Heart left ventricle (tissue), 16 donors: ENCODE measurements at regions of chr4 and their contacts with region 1.

Region 1: GRCh38 chr4:170853422-170854021 is 763.8 kb upstream of the AADAT start:
- DNase-seq: peak in 4 of 5 donors; percentile 6 to 42 (median 22)
- ATAC-seq: peak in 1 of 4 donors; percentile 49
- H3K4me3 ChIP-seq: no peak overlapping the region
- H3K27ac ChIP-seq: no peak overlapping the region
- H3K4me1 ChIP-seq: no peaks in the 10 kb centered on the region
- H3K27me3 ChIP-seq: no peaks in the 10 kb centered on the region
- CTCF ChIP-seq: peak; percentile 33 to 67 (median 54)
- POLR2A ChIP-seq: no peak

Region 2: GRCh38 chr4:170138580-170139194 is 714.8 kb before region 1 on chr4:
- intact Hi-C with region 1: loop called in 3 of 10 experiments (anchors 2 to 10 kb)
- DNase-seq: peak; percentile 37 to 69 (median 58)
- ATAC-seq: peak in 3 of 4 donors; percentile 49 to 66 (median 66)
- H3K4me3 ChIP-seq: no peak overlapping the region
- H3K27ac ChIP-seq: no peak overlapping the region
- H3K4me1 ChIP-seq: peaks cover 0 to 4% (median 0%) of the 10 kb centered on the region in 12 donors
- H3K27me3 ChIP-seq: no peaks in the 10 kb centered on the region
- CTCF ChIP-seq: peak; percentile 70 to 85 (median 76)
- POLR2A ChIP-seq: no peak

Region 3: DNA sequence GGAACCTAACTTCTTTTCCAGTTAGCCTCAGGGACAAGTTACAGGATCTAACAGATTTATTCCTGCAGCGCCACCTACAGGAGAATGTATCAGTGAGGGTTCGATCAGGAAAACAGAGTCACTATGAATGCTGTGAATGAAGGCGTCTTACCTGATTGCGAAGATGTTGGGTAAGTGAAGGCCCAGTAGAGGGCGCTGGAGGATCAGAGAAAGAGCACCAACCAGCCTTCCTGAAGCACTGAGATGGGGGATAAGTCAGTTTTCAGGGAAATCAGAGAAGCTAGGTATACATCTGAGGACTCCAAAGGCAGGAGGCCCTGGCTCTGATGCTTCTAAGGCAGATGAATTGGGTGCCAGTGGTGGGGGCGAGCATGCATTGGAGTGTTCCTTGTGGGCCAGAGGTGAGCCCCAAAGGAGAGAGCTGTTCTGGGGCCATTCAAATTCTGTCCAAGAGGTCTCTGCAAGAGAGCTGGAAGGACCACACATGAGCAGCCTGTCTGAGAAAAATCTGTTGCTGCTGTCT is 593.8 kb before region 1 on chr4:
- intact Hi-C with region 1: loop called in 7 of 10 experiments (anchors 5 to 10 kb)
- DNase-seq: peak in 3 of 5 donors; percentile 22 to 34 (median 23)
- ATAC-seq: peak in 3 of 4 donors; percentile 48 to 63 (median 50)
- H3K4me3 ChIP-seq: no peak overlapping the region
- H3K27ac ChIP-seq: no peak overlapping the region
- H3K4me1 ChIP-seq: no peaks in the 10 kb centered on the region
- H3K27me3 ChIP-seq: peaks cover 0 to 15% (median 0%) of the 10 kb centered on the region in 9 donors
- CTCF ChIP-seq: peak; percentile 39 to 71 (median 55)
- POLR2A ChIP-seq: no peak

Region 4: DNA sequence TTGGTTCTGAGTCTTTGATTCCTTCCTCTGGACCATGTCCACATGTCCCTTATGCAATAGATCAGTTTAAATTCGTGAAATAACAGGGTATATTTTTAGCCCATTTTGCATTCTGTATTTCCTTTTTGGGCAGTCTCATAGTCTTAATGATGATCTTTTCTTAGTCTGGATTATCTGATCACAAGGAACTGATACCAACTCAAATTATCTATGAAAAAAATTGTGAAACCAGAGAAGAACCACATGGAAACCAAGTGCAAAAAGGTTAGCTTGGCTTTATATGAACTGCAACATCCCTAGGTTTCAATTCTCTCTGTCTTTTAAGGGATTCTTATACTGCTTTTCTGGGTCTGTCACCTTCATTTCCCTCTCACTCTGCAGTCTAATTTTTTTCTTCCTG is 155.2 kb before region 1 on chr4:
- intact Hi-C with region 1: no loop called
- DNase-seq: no peak
- ATAC-seq: no peak
- H3K4me3 ChIP-seq: no peak overlapping the region
- H3K27ac ChIP-seq: no peak overlapping the region
- H3K4me1 ChIP-seq: no peaks in the 10 kb centered on the region
- H3K27me3 ChIP-seq: no peaks in the 10 kb centered on the region
- CTCF ChIP-seq: no peak
- POLR2A ChIP-seq: no peak

Region 5: DNA sequence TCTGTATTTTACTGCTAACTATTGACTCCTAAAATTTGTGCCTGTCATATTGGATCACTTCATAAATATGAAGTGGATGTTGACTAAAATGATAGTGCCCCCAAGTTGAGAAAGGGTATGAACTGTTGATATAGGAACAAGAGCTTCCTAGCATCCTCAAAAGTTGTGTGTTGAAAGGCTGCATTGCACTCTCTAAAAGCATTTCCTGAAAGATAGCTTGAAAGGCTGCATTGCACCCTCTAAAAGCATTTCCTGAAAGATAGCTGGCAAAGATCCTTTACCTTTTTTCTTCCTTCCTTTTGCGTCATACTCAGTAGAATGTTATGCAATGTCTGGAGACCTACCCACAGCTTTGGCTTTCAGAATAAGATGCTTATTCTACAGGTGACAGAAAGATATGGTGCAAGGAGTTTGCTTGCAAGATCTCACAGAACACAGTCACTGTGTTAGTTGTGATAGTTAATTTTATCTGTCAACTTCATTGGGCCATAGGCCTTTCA is 685.1 kb after region 1 on chr4:
- intact Hi-C with region 1: no loop called
- DNase-seq: no peak
- ATAC-seq: no peak
- H3K4me3 ChIP-seq: no peak overlapping the region
- H3K27ac ChIP-seq: no peak overlapping the region
- H3K4me1 ChIP-seq: no peaks in the 10 kb centered on the region
- H3K27me3 ChIP-seq: no peaks in the 10 kb centered on the region
- CTCF ChIP-seq: no peak
- POLR2A ChIP-seq: no peak